B cell (primary cell): ENCODE measurements at regions of chr2 and their contacts with region 1.

Region 1: DNA sequence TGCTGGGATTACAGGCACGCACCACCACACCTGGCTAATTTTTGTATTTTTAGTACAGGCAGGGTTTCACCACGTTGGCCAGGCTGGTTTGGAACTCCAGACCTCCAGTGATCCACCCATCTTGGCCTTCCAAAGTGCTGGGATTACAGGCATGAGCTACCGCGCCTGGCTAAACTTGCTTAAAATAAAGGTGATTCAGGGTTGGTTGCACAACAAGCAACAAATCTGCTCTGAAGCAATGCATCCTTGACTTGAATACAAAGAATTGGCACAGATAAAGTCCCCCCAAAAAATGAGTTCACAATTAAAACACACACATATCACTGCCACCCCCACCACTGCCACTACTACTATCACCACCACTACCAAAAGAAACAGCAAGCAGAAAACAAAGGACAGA is 34.9 kb downstream of the CCDC88A start:
- DNase-seq: no peak
- ATAC-seq: no peak
- H3K4me3 ChIP-seq: no peak overlapping the region
- H3K4me3 Mint-ChIP-seq: no peak overlapping the region
- H3K27ac ChIP-seq: no peak overlapping the region
- H3K27ac Mint-ChIP-seq: no peak overlapping the region
- H3K4me1 ChIP-seq: peaks cover 0 to 3% of the 10 kb centered on the region in 2 donors
- H3K4me1 Mint-ChIP-seq: peaks cover 4% of the 10 kb centered on the region
- H3K27me3 ChIP-seq: no peaks in the 10 kb centered on the region
- H3K27me3 Mint-ChIP-seq: no peaks in the 10 kb centered on the region
- CTCF ChIP-seq: no peak

Region 2: GRCh38 chr2:55338268-55338667 is 46.5 kb before region 1 on chr2:
- CTCF ChIA-PET with region 1: no interaction called
- POLR2A ChIA-PET with region 1: no interaction called
- intact Hi-C with region 1: loop called (anchors 10 kb)
- DNase-seq: no peak
- ATAC-seq: no peak
- H3K4me3 ChIP-seq: no peak overlapping the region
- H3K4me3 Mint-ChIP-seq: no peak overlapping the region
- H3K27ac ChIP-seq: no peak overlapping the region
- H3K27ac Mint-ChIP-seq: no peak overlapping the region
- H3K4me1 ChIP-seq: no peaks in the 10 kb centered on the region
- H3K4me1 Mint-ChIP-seq: no peaks in the 10 kb centered on the region
- H3K27me3 ChIP-seq: no peaks in the 10 kb centered on the region
- H3K27me3 Mint-ChIP-seq: no peaks in the 10 kb centered on the region
- CTCF ChIP-seq: no peak